ENCODE measurements at regions of chr13 and their contacts with region 1.

Region 1: GRCh38 chr13:78595495-78596398 is 7.6 kb downstream of the POU4F1 start:
- DNase-seq: no peak
- H3K4me3 Mint-ChIP-seq: no peak overlapping the region
- H3K27ac Mint-ChIP-seq: peak overlapping the region; percentile 61
- H3K4me1 Mint-ChIP-seq: no peaks in the 10 kb centered on the region
- H3K27me3 Mint-ChIP-seq: peaks cover 87% of the 10 kb centered on the region

Region 2: DNA sequence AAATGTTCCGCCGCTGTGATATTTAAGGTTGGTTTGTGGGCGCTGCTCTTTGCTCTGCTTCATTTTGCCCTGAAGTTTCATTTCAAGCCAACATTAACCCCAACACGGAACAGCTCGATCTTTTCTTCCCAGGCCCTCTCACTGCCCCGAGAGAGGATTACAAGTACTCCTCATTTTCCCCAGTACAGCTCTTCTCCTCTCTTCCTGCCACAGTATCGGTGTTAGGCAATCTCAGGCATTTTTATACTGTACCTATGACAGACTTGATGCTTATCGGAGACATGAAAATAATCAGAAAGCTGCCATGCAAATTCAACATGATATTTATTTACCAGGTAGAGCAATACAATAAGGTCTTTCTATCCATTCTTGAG is 675.8 kb before region 1 on chr13:
- intact Hi-C with region 1: loop called (anchors 5 kb)
- DNase-seq: no peak
- H3K4me3 Mint-ChIP-seq: no peak overlapping the region
- H3K27ac Mint-ChIP-seq: no peak overlapping the region
- H3K4me1 Mint-ChIP-seq: peaks cover 8% of the 10 kb centered on the region
- H3K27me3 Mint-ChIP-seq: peaks cover 7% of the 10 kb centered on the region

Region 3: GRCh38 chr13:78022164-78022877 is 573.4 kb before region 1 on chr13:
- intact Hi-C with region 1: no loop called
- DNase-seq: peak; percentile 35
- H3K4me3 Mint-ChIP-seq: no peak overlapping the region
- H3K27ac Mint-ChIP-seq: peak overlapping the region; percentile 76
- H3K4me1 Mint-ChIP-seq: peaks cover 10% of the 10 kb centered on the region
- H3K27me3 Mint-ChIP-seq: peaks cover 14% of the 10 kb centered on the region

Region 4: DNA sequence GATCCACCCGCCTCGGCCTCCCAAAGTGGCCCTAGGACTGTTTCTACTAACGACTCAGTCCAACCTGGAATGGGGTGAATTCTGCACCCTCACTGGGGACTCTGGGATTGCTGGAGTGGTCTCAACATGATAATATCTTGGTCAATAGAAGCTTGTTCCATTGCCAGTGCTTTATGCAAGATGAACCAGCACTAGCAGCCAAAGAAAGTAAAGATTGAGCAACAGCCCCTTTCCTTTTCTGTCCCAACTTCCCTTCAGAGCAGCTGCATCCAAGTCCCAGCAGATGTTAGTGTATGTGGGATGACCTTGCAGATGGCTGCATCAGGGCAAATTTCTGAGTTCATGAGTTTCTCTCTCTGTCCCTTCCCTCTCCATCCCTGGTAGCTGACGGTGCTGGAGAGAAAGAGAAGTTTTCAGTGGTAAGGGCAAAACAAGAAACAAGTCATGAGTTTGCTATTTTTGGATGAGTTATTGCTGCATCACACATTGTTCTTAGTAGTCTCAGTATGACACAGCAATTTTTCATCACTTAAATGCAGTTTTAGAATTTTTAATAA is 493.5 kb before region 1 on chr13:
- intact Hi-C with region 1: no loop called
- DNase-seq: no peak
- H3K4me3 Mint-ChIP-seq: no peak overlapping the region
- H3K27ac Mint-ChIP-seq: no peak overlapping the region
- H3K4me1 Mint-ChIP-seq: no peaks in the 10 kb centered on the region
- H3K27me3 Mint-ChIP-seq: no peaks in the 10 kb centered on the region

Region 5: GRCh38 chr13:78137404-78138142 is 458.2 kb before region 1 on chr13:
- intact Hi-C with region 1: loop called (anchors 5 kb)
- DNase-seq: no peak
- H3K4me3 Mint-ChIP-seq: no peak overlapping the region
- H3K27ac Mint-ChIP-seq: no peak overlapping the region
- H3K4me1 Mint-ChIP-seq: peaks cover 5% of the 10 kb centered on the region
- H3K27me3 Mint-ChIP-seq: peaks cover 2% of the 10 kb centered on the region

Region 6: DNA sequence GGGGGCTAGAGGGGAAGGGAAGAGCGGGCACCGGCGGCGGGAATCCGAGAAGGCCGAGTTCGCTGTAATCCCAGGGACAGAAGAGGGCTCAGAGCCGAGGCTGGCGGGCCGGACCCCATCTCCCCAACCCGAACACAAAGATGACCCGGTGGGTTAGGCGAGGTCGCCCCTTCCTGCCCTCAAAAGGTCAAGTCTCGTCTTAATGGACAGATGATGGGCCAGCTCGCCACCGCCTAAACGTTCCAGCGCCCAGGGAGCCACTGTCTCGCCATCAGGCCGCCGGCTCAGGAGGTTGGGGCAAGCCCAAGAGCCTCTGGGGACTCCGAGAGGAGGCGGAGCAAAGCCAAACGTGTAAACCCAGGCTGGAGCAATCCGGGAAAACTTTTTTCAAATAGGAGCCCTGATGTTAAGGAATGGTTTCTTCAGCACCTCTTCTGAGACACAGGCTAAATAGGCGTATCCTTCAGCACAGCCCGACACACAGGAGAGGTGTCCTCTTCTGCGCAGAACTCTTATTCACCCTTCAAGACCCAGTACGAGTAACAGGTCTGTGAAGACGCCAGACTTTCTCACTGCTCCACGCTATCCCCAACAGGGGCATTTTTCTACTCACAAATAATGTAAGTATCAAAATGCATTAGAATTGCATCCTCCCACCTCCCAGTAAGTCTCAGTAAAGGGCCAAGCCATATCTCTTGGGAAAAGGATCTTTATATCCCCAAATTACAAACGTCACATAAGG is 13.9 kb after region 1 on chr13:
- intact Hi-C with region 1: loop called (anchors 1 kb)
- DNase-seq: no peak
- H3K4me3 Mint-ChIP-seq: peak overlapping the region; percentile 57
- H3K27ac Mint-ChIP-seq: no peak overlapping the region
- H3K4me1 Mint-ChIP-seq: peaks cover 15% of the 10 kb centered on the region
- H3K27me3 Mint-ChIP-seq: peaks cover 68% of the 10 kb centered on the region

Region 7: DNA sequence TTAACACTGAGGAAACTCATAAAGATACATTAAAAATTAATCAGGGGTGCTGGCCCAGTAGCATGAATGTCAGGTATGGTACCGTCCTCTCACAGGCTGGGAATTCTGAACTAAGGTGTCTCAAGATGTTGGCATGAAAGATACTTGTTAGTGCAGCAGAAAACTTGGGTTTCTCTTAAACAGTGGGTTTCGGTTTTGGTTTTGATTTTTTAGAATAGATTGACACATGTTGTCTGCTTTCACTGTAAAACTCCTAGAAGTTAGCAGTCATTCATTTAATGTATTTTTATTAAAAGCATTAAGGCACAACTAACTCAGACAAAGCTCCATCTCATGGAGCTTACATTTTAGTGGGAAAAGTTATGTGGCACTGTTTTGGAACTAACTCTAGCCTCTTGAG is 66.7 kb after region 1 on chr13:
- intact Hi-C with region 1: no loop called
- DNase-seq: no peak
- H3K4me3 Mint-ChIP-seq: no peak overlapping the region
- H3K27ac Mint-ChIP-seq: no peak overlapping the region
- H3K4me1 Mint-ChIP-seq: peaks cover 23% of the 10 kb centered on the region
- H3K27me3 Mint-ChIP-seq: no peaks in the 10 kb centered on the region

Region 8: DNA sequence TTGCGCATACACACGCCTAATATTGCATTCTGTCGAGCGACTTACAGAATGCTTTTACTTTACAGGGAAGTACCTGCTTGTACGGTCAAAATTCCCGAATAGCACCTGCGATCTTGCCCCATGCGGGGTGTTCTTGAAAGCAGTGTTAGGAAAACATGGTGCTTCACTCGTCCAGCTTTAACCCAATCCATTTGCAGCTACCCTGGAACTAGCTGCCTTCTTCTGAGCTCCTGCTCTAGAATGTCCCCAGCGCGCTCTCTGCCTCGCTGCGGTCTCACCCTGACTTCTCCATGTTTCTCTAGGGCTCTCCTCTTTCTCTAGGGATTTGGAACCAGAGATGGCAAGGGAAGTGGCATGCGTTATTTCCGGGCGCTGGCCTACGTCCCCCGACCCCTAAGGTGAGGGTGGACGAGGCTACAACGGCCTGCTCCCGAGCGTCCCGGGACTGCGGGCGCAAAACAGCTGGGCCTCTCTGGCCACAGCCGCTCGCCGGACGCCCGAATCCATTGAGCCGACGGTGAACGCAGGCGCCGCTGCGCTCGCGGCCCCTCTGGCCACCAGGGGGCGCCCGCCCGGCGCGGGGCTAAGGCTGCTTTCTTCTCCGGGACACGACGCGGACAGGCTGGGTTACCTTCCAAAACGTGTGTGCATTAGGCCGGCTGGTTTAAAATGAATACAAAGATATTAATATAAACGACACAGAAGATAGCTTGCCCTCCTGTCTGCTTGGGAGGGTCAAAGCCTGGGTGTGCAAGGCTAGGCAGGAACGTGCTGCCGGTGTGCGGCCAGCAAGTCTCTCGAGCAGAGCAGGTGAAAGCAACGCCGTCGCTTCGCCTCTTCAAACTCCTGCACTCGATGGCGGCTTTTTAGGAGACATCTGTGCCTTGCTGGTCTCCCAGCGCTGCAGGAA is 1747.0 kb after region 1 on chr13:
- intact Hi-C with region 1: loop called (anchors 5 kb)
- DNase-seq: peak; percentile 56
- H3K4me3 Mint-ChIP-seq: peak overlapping the region; percentile 17
- H3K27ac Mint-ChIP-seq: no peak overlapping the region
- H3K4me1 Mint-ChIP-seq: peaks cover 18% of the 10 kb centered on the region
- H3K27me3 Mint-ChIP-seq: peaks cover 45% of the 10 kb centered on the region